B cell (primary cell): ENCODE measurements at regions of chr7 and their contacts with region 1.

Region 1: DNA sequence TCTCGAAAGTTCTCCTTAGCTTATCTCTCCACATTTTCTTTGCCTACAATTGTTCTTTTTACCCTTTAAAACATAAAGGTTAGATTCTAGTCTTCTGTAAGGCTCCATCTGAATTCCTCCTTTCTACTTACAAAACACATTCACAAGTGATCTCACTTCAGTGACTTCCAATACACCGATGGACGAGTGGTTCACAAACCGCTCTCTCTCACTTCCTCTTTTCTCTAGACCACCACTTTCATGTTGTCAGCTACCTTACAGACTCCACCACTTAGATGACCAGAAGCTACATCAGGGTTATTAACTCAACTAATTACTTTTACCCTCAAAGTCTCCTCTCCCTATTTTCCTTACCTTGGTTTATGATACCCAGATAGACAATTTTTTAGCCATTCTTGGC is 11.8 kb downstream of the MET start:
- DNase-seq: peak; percentile 69
- ATAC-seq: peak; percentile 98
- H3K4me3 ChIP-seq: no peak overlapping the region
- H3K4me3 Mint-ChIP-seq: no peak overlapping the region
- H3K27ac ChIP-seq: no peak overlapping the region
- H3K27ac Mint-ChIP-seq: no peak overlapping the region
- H3K4me1 ChIP-seq: peaks cover 7 to 26% of the 10 kb centered on the region in 2 donors
- H3K4me1 Mint-ChIP-seq: peaks cover 18% of the 10 kb centered on the region
- H3K27me3 ChIP-seq: peaks cover 1 to 88% (median 67%) of the 10 kb centered on the region in 4 experiments
- H3K27me3 Mint-ChIP-seq: peaks cover 76% of the 10 kb centered on the region
- CTCF ChIP-seq: no peak

Region 2: DNA sequence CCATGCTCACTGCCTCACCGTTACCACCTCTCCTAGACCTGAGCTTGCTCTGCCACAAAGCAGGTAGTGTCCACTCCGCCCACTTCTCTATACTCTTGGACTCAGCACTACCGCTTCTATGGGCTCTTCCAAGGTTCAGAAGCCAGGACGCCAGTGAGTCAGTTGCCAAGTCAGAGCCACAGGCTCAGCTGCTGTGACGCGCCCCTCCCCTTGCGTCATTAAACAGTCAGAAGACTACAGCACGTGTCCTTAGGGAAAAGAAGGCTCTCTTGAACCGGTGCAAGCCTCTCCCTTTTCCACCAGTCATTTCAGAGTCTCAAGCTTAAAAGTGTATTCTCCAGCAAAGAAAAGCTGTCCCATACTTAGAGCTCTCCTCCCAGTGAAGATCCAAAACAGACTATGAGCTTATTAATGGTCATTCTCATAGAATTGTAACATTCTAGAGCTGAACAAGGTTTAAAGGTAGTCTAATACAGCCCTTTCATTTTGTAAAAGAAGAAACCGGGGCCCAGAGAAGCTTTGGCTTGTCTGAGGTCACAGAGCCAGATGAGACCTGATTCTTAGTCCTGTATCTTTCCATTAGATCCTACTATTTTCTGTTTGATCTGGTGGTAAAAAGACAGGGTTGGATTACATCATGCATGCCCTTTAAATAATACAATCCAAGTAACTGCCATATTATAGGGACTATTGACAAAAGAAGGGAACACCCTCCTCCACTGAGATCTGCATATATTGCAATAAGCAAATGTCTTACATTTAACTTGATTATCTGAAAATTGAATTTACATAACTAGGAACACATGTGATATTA is 52.6 kb before region 1 on chr7:
- CTCF ChIA-PET with region 1: no interaction called
- POLR2A ChIA-PET with region 1: no interaction called
- intact Hi-C with region 1: loop called (anchors 5 kb)
- DNase-seq: peak; percentile 62
- ATAC-seq: peak; percentile 77
- H3K4me3 ChIP-seq: peak overlapping the region in 2 of 5 experiments; percentile 25 to 34
- H3K4me3 Mint-ChIP-seq: peak overlapping the region; percentile 81
- H3K27ac ChIP-seq: no peak overlapping the region
- H3K27ac Mint-ChIP-seq: peak overlapping the region; percentile 17
- H3K4me1 ChIP-seq: peaks cover 0 to 7% of the 10 kb centered on the region in 2 donors
- H3K4me1 Mint-ChIP-seq: peaks cover 22% of the 10 kb centered on the region
- H3K27me3 ChIP-seq: peaks cover 0 to 7% (median 0%) of the 10 kb centered on the region in 4 experiments
- H3K27me3 Mint-ChIP-seq: no peaks in the 10 kb centered on the region
- CTCF ChIP-seq: no peak

Region 3: GRCh38 chr7:116776610-116777289 is 93.0 kb after region 1 on chr7:
- CTCF ChIA-PET with region 1: no interaction called
- POLR2A ChIA-PET with region 1: no interaction called
- intact Hi-C with region 1: no loop called
- DNase-seq: no peak
- ATAC-seq: no peak
- H3K4me3 ChIP-seq: no peak overlapping the region
- H3K4me3 Mint-ChIP-seq: no peak overlapping the region
- H3K27ac ChIP-seq: no peak overlapping the region
- H3K27ac Mint-ChIP-seq: no peak overlapping the region
- H3K4me1 ChIP-seq: no peaks in the 10 kb centered on the region
- H3K4me1 Mint-ChIP-seq: no peaks in the 10 kb centered on the region
- H3K27me3 ChIP-seq: peaks cover 0 to 5% (median 1%) of the 10 kb centered on the region in 4 experiments
- H3K27me3 Mint-ChIP-seq: no peaks in the 10 kb centered on the region
- CTCF ChIP-seq: no peak

Region 4: DNA sequence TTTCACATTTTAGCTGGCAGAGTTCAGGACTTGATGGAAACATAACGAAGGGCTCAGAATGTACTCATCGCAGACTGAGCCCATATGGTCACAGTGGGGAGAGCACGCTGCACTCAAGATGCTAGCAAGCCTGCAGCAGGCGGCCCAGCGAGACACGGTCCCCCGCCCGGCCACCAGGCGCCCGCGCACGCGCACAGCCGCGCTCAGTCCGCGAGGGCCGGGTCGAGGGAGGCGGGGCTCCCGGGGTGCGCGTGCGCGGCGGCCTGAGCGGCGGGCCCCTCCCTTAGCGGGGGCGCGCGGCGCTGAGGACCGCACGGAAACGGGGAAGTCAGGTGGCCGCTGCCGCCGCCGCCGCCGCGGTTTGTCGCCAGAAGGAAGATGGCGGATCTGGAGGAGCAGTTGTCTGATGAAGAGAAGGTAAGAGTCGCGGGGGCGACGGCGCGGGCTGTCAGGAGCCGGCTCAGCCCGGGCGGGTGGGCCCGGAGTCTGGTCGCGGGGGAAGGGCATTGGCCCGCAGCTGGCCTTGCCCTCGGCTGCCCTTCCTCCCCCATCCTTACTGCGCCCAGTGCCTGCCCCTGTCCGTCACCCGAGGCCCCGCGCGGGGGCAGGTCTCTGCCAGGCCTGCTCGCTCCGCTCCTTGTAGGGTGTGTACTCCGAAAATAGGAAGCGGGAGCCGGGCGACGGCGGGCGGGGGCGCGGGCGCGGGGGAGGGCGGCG is 178.6 kb after region 1 on chr7 and contains the start of gene CAPZA2:
- CTCF ChIA-PET with region 1: no interaction called
- POLR2A ChIA-PET with region 1: no interaction called
- intact Hi-C with region 1: no loop called
- DNase-seq: peak; percentile 96
- ATAC-seq: peak; percentile 86
- H3K4me3 ChIP-seq: peak within 1 kb of the TSS; percentile 63 to 93 (median 87)
- H3K4me3 Mint-ChIP-seq: peak within 1 kb of the TSS; percentile 92
- H3K27ac ChIP-seq: peak within 1 kb of the TSS; percentile 80 to 90
- H3K27ac Mint-ChIP-seq: peak within 1 kb of the TSS; percentile 92
- H3K4me1 ChIP-seq: peaks cover 17 to 19% of the 10 kb centered on the region in 2 donors
- H3K4me1 Mint-ChIP-seq: peaks cover 38% of the 10 kb centered on the region
- H3K27me3 ChIP-seq: no peaks in the 10 kb centered on the region
- H3K27me3 Mint-ChIP-seq: peaks cover 18% of the 10 kb centered on the region
- CTCF ChIP-seq: peak; percentile 58
- total RNA-seq, gene CAPZA2: 79.0 and 93.7 TPM in 2 replicates

Region 5: DNA sequence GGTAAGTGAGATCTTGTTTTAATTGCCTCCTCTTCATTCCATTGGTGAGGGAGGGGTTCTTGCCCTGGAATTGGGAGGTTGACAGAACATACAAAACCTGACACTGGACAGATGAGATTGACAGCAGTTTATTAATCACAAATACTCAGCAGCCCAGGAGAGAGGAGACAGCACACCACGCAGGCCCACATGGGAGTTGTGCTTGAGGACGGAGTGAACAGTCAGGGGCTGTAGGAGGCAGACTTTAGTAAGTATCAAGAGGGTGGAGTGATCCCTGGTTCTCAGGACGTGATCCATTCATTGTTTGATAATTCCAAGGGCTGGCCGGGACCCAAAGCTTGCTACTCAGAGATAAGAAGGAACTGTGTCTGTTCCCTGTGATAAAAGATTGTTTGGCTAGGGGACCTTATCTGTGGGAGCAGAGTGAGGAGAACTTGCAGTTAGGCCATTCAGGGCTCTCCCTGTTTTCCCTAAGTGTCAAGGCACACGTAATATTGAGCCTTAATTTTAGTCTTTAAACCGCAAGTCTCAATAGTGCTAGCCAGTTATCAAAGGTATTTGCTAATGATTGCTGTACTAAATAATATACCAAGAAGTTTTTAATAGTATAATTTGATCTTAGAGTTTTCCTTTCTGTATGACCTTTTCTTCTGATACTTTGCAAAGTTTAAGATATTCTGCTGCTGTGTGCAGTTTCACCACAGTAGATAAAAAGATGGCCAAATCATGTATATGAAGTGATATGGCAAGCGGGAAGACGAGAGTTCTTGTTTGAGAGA is 193.1 kb after region 1 on chr7:
- CTCF ChIA-PET with region 1: no interaction called
- POLR2A ChIA-PET with region 1: no interaction called
- intact Hi-C with region 1: no loop called
- DNase-seq: no peak
- ATAC-seq: no peak
- H3K4me3 ChIP-seq: no peak overlapping the region
- H3K4me3 Mint-ChIP-seq: no peak overlapping the region
- H3K27ac ChIP-seq: no peak overlapping the region
- H3K27ac Mint-ChIP-seq: no peak overlapping the region
- H3K4me1 ChIP-seq: peaks cover 9 to 12% of the 10 kb centered on the region in 2 donors
- H3K4me1 Mint-ChIP-seq: peaks cover 30% of the 10 kb centered on the region
- H3K27me3 ChIP-seq: no peaks in the 10 kb centered on the region
- H3K27me3 Mint-ChIP-seq: no peaks in the 10 kb centered on the region
- CTCF ChIP-seq: no peak